ENCODE measurements at regions of chr1 and their contacts with region 1.

Region 1: DNA sequence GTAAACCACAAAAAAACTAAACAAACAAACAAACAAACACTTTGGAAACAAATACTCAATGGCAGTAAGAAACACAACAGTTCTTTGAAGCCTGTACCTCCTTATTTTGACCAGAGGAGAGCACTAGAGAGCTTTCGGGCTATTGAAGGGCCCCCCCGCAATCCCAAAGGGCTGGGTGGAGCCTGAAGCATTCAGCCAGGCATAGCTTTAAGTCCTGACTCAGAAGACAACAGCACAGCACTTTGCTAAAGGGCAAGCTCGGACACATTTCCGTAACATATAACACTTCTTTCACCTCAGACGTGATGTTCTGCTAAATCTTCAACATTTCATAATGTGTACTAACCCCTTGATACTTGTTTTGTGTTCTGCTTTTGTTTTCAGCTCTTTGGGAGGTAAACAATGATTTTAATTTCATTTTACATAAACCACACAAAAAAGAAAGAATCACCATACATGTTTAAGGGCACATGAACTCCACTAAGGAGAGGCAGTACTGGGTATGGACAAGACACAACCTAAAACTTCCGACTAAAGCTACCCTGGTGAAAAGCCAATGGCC is 9.7 kb upstream of the SHCBP1L start:
- H3K4me3 ChIP-seq: peak overlapping the region; percentile 9; the same call in 1 of the 2 replicates
- H3K27ac ChIP-seq: no peak overlapping the region
- H3K4me1 ChIP-seq: no peaks in the 10 kb centered on the region
- CTCF ChIP-seq: peak; percentile 79; the same call in 1 of the 2 replicates

Region 2: GRCh38 chr1:182974506-182975191 is 12.0 kb after region 1 on chr1:
- CTCF ChIA-PET with region 1: interaction called, 20 read pairs
- POLR2A ChIA-PET with region 1: no interaction called
- H3K4me3 ChIP-seq: no peak overlapping the region
- H3K27ac ChIP-seq: no peak overlapping the region
- H3K4me1 ChIP-seq: peaks cover 3% of the 10 kb centered on the region; the same call in 1 of the 2 replicates
- CTCF ChIP-seq: no peak

Region 3: DNA sequence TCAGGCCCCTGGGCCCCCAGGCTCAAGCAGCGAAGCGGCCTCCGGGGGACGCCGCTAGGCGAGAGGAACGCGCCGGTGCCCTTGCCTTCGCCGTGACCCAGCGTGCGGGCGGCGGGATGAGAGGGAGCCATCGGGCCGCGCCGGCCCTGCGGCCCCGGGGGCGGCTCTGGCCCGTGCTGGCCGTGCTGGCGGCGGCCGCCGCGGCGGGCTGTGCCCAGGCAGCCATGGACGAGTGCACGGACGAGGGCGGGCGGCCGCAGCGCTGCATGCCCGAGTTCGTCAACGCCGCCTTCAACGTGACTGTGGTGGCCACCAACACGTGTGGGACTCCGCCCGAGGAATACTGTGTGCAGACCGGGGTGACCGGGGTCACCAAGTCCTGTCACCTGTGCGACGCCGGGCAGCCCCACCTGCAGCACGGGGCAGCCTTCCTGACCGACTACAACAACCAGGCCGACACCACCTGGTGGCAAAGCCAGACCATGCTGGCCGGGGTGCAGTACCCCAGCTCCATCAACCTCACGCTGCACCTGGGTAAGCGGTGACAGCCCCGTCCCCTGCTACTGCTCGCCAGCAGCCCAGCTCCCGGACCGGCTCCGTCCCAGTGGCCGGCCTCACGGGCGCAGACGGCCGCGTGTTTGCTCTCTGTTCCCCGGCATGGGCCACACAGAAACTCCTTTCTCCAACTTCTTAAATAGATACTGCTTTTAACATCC is 61.1 kb after region 1 on chr1:
- CTCF ChIA-PET with region 1: interaction called, 17 read pairs
- POLR2A ChIA-PET with region 1: interaction called, 5 read pairs
- H3K4me3 ChIP-seq: peak overlapping the region; percentile 80
- H3K27ac ChIP-seq: peak overlapping the region; percentile 96
- H3K4me1 ChIP-seq: peaks cover 29% of the 10 kb centered on the region; the same call in 1 of the 2 replicates
- CTCF ChIP-seq: peak; percentile 96

Region 4: GRCh38 chr1:183227963-183228649 is 265.5 kb after region 1 on chr1:
- CTCF ChIA-PET with region 1: interaction called, 13 read pairs
- POLR2A ChIA-PET with region 1: no interaction called
- H3K4me3 ChIP-seq: no peak overlapping the region
- H3K27ac ChIP-seq: no peak overlapping the region
- H3K4me1 ChIP-seq: no peaks in the 10 kb centered on the region
- CTCF ChIP-seq: no peak; the same call in 1 of the 2 replicates

Region 5: DNA sequence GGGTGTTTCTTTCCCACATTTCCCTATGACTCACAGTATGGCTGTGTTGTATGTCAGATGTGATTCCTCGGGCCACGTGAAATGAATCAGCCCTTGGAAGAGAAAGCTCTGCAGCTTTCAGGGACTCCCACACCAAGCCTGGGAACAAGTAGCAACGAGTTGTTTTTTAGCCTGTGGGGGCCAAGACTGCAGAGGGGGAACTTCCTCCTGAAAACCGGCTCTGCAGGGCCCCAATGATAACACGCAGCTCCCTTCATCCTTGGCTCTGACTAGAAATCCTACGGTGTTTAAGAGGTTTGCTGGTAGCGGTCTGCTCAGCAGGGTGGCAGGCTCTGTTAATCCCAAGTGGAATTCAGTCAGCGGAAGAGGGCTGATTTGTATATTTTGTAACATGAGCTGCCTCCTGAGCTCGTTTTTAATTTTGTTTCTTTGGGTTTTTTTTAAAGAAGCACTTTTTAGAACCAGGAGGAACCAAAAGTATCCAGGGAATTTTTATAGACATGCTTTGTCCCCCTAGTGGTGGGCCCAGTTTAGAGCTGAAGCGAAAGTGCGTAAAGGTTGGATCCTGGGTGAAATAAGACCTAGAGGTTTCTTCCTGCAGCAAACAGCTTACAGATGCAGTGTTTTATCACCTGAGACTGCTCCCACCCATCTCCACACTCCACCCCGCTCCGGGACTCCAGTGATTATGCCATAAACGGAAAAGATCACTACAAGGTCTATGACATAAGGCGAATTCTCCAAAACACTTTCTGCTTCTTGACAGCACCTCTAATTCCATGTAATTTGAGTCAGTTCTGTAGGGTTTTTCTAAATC is 272.2 kb after region 1 on chr1:
- CTCF ChIA-PET with region 1: interaction called, 15 read pairs
- POLR2A ChIA-PET with region 1: no interaction called
- H3K4me3 ChIP-seq: peak overlapping the region; percentile 16
- H3K27ac ChIP-seq: peak overlapping the region; percentile 68
- H3K4me1 ChIP-seq: peaks cover 6% of the 10 kb centered on the region
- CTCF ChIP-seq: peak; percentile 67

Measured in HEK293 (cell line).